ENCODE measurements at regions of chr10 and their contacts with region 1.

Region 1: GRCh38 chr10:63515002-63515763 is 6.0 kb upstream of the REEP3 start:
- DNase-seq: no peak
- ATAC-seq: peak; percentile 47
- H3K4me3 Mint-ChIP-seq: no peak overlapping the region
- H3K27ac Mint-ChIP-seq: peak overlapping the region; percentile 47
- H3K4me1 Mint-ChIP-seq: peaks cover 52% of the 10 kb centered on the region
- H3K27me3 Mint-ChIP-seq: no peaks in the 10 kb centered on the region

Region 2: GRCh38 chr10:63504125-63504880 is 10.9 kb before region 1 on chr10:
- CTCF ChIA-PET with region 1: interaction called, 10 read pairs
- DNase-seq: no peak
- ATAC-seq: no peak
- H3K4me3 Mint-ChIP-seq: no peak overlapping the region
- H3K27ac Mint-ChIP-seq: no peak overlapping the region
- H3K4me1 Mint-ChIP-seq: no peaks in the 10 kb centered on the region
- H3K27me3 Mint-ChIP-seq: no peaks in the 10 kb centered on the region